Vagina (tissue), 2 donors: ENCODE measurements at regions of chr13 and their contacts with region 1.

Region 1: DNA sequence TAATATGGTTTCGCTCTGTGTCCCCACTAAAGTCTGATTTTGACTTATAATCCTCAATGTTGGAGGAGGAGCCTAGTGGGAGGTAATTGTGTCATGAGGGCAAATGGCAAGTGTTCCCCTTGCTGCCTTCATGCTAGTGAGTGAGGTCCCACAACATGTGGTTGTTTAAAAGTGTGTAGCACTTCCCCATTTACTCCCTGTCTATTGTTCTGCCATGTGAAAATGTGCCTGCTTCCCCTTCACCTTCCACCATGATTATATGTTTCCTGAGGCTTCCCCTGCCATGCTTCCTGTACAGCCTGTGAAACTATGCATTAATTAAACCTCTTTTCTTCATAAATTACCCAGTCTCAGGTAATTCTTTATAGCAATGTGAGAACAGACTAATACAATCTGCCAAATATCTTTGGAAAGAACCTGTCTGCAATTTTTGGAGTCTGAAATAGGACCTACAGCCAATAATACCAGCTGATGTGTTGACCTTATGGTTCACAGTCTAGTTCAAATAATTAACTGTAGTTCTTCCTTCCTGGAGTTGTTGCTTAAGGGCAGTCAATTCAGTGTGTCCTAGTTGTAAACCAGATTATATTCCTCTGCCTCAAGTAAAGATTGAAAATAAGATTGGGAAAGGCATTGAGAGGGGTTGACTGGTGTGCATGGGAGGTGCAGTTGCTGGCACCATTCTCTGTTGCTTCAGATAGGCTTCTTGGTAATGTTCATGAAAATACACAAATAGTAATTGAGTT is 1442.9 kb downstream of the SLITRK1 start:
- DNase-seq: no peak
- H3K4me3 ChIP-seq: no peak overlapping the region
- H3K27ac ChIP-seq: no peak overlapping the region
- H3K4me1 ChIP-seq: no peaks in the 10 kb centered on the region
- H3K27me3 ChIP-seq: no peaks in the 10 kb centered on the region
- CTCF ChIP-seq: no peak
- POLR2A ChIP-seq: no peak

Region 2: GRCh38 chr13:81722456-81722855 is 716.9 kb before region 1 on chr13:
- intact Hi-C with region 1: loop called (anchors 5 kb)
- DNase-seq: no peak
- H3K4me3 ChIP-seq: no peak overlapping the region
- H3K27ac ChIP-seq: no peak overlapping the region
- H3K4me1 ChIP-seq: no peaks in the 10 kb centered on the region
- H3K27me3 ChIP-seq: no peaks in the 10 kb centered on the region
- CTCF ChIP-seq: no peak
- POLR2A ChIP-seq: no peak

Region 3: GRCh38 chr13:82147526-82147925 is 291.8 kb before region 1 on chr13:
- intact Hi-C with region 1: no loop called
- DNase-seq: no peak
- H3K4me3 ChIP-seq: no peak overlapping the region
- H3K27ac ChIP-seq: no peak overlapping the region
- H3K4me1 ChIP-seq: no peaks in the 10 kb centered on the region
- H3K27me3 ChIP-seq: no peaks in the 10 kb centered on the region
- CTCF ChIP-seq: no peak
- POLR2A ChIP-seq: no peak